ENCODE measurements at regions of chr6 and their contacts with region 1.

Region 1: GRCh38 chr6:63764318-63764916 is 128.8 kb downstream of the PHF3 start:
- DNase-seq: peak; percentile 52
- H3K4me3 ChIP-seq: no peak overlapping the region
- H3K27ac ChIP-seq: no peak overlapping the region
- H3K4me1 ChIP-seq: no peaks in the 10 kb centered on the region
- H3K27me3 ChIP-seq: no peaks in the 10 kb centered on the region
- CTCF ChIP-seq: peak; percentile 64

Region 2: DNA sequence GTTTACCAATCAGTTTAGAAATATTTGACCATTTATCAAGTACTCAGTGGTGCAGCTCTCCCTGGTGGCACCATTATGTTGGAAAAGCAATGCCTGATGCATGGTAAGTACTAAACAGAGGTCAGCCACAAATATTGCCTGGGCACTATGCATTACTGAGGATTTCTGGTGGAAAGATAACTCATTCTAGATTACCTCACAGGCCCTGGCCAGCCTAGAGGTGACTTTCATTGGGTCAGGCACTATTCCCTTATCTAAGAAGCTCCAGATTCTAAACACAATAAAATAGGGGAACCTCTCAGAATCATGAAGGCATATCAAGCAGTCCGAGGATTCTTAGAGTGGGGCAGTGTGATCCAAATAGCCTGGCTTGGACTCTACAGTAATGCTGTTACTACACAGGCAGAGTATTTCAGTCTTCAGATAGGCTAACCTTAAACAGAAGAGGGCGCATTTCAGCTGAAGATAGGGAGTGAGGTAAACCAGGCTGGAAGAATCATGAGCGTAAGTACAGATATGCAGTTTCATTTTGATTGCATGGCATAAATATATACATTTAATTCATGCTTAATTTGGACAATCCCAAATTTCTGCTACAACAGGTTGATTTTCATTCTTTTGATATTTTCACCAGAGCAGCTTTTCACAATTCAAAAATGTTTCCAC is 456.7 kb before region 1 on chr6:
- CTCF ChIA-PET with region 1: interaction called, 5 read pairs
- POLR2A ChIA-PET with region 1: no interaction called
- intact Hi-C with region 1: loop called (anchors 5 kb)
- DNase-seq: peak; percentile 59
- H3K4me3 ChIP-seq: no peak overlapping the region
- H3K27ac ChIP-seq: no peak overlapping the region
- H3K4me1 ChIP-seq: no peaks in the 10 kb centered on the region
- H3K27me3 ChIP-seq: no peaks in the 10 kb centered on the region
- CTCF ChIP-seq: peak; percentile 68

Region 3: GRCh38 chr6:63352587-63353285 is 411.7 kb before region 1 on chr6:
- CTCF ChIA-PET with region 1: interaction called, 7 read pairs
- POLR2A ChIA-PET with region 1: no interaction called
- intact Hi-C with region 1: loop called (anchors 2 kb)
- DNase-seq: peak; percentile 11
- H3K4me3 ChIP-seq: no peak overlapping the region
- H3K27ac ChIP-seq: no peak overlapping the region
- H3K4me1 ChIP-seq: no peaks in the 10 kb centered on the region
- H3K27me3 ChIP-seq: no peaks in the 10 kb centered on the region
- CTCF ChIP-seq: peak; percentile 50

Region 4: DNA sequence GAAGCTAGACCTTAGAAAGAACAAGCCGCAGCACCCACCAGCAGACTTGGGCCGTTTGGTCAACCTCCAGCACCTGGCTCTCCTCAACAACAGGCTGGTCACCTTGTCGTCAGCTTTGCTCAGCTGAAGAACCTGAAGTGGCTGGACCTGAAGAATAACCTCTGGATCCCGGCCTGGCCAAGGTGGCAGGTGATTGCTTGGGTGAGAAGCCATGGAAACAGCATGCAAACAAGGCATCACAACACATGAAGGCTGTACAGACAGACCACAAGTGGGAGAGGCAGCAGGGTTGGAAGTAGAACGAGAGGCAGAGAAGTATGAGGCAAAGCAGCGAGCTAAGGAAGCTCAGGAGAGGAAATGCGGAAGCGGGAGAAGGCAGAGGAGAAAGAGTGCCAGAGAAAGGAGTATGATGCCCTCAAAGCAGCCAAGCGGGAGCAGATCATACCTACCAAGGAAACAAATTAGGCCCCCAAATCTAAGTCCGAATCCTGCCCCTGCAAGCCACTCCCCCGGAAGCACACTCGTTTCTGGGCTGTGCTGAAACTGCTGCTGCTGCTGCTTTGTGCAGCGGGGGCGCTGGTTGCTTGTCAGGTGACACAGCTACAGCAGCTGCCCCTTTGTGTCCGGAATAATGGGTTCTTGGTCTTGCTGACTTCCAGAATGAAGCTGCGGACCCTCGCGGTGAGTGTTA is 323.0 kb before region 1 on chr6:
- CTCF ChIA-PET with region 1: no interaction called
- POLR2A ChIA-PET with region 1: no interaction called
- intact Hi-C with region 1: no loop called
- DNase-seq: no peak
- H3K4me3 ChIP-seq: no peak overlapping the region
- H3K27ac ChIP-seq: no peak overlapping the region
- H3K4me1 ChIP-seq: no peaks in the 10 kb centered on the region
- H3K27me3 ChIP-seq: no peaks in the 10 kb centered on the region
- CTCF ChIP-seq: no peak

Region 5: DNA sequence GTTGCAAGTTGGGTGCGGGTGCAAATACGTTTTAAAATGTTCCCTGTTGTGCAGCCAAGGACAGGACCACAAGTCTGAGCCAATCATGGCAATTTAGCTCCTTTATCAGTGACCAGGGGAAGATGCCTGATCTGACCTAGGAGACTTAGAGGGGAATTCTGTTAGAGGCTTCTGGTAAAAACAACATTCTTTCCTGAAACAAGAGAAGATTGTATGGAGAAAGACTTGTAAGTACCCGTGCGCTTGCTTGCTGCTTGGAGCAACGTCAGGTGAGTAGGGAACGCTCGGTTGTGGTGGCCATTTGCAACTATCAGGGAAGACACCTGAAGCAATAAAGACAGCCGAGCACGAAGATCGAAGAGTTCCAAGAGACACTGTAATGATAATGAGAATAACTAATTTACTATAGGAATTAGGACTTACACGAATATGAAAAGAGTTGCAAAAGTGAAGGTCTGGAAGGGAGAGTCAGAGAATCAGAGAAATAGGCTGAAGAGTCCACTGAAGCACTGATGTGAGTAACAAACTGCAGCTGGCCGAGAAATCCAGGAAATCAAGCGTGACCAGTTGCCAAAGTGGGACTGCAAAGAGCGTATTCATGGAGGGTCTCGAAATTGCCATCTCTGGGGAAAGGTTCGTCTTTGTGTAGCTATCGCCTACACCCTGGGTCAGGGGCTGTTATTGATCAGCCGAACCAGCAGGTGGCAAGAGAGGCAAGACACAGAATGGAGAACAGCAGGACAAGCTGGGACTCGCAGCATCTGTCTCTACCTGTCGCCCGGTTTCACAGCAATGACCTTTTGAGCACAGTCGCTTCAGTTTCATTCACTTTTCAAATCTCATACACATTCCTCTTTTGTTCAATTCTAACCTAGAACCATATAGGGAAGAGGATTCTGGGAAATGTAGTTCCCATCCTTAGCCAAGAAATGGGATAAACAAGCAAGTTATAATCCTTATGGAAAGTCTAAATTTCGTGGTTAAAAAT is 166.1 kb before region 1 on chr6:
- CTCF ChIA-PET with region 1: interaction called, 17 read pairs
- POLR2A ChIA-PET with region 1: no interaction called
- intact Hi-C with region 1: loop called (anchors 2 kb)
- DNase-seq: peak; percentile 80
- H3K4me3 ChIP-seq: peak overlapping the region; percentile 54
- H3K27ac ChIP-seq: no peak overlapping the region
- H3K4me1 ChIP-seq: no peaks in the 10 kb centered on the region
- H3K27me3 ChIP-seq: no peaks in the 10 kb centered on the region
- CTCF ChIP-seq: peak; percentile 92

Region 6: GRCh38 chr6:63802606-63803206 is 38.3 kb after region 1 on chr6:
- CTCF ChIA-PET with region 1: no interaction called
- POLR2A ChIA-PET with region 1: no interaction called
- intact Hi-C with region 1: no loop called
- DNase-seq: peak; percentile 49
- H3K4me3 ChIP-seq: no peak overlapping the region
- H3K27ac ChIP-seq: no peak overlapping the region
- H3K4me1 ChIP-seq: peaks cover 37% of the 10 kb centered on the region
- H3K27me3 ChIP-seq: no peaks in the 10 kb centered on the region
- CTCF ChIP-seq: peak; percentile 80